Posterior vena cava (tissue), 2 donors: ENCODE measurements at regions of chr1 and their contacts with region 1.

Region 1: GRCh38 chr1:235075188-235075926 is 53.3 kb downstream of the TOMM20 start:
- DNase-seq: peak; percentile 84

Region 2: GRCh38 chr1:234486498-234487448 is 588.6 kb before region 1 on chr1:
- intact Hi-C with region 1: loop called in 1 of 2 experiments (anchors 5 kb)
- DNase-seq: no peak

Region 3: DNA sequence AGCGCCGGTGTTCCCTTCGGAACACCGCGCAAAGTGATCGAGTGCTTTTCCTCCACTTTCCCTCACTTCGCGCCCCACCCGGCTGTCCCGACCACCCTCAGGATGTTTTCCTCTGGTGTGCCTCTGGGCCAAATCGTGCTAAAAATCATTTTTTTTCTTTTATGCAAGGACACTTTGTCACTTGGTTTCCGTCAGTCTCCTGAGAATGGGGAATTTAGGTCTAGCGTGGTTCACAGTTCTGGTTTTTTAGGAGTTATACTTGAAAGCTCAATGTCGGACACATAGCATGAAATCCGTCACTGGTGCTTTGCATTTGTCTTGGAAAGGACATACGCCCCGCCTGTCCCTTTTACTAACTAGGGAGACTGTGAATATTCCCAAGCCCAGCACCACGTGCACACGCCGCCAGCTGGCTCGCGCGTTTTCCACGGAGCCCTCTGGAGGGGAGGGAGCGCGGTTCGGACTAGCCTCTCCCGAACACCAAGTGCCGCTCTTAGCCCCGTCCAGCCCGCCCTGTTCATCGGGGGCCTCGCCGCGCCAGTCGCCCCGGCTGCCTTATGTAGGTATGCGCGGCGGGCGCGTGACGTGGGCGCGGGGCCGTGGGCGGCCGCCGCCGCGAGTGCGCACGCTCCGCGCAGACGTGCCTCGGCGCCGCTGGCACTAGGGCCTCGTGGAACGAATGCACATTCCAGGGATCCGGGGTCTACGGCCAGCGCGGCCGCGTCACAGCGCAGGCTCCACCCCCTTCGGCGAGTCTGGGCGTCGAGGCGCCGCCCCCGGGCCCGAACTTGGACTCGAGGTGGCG is 464.8 kb before region 1 on chr1:
- intact Hi-C with region 1: loop called (anchors 5 kb)
- DNase-seq: peak; percentile 99

Region 4: DNA sequence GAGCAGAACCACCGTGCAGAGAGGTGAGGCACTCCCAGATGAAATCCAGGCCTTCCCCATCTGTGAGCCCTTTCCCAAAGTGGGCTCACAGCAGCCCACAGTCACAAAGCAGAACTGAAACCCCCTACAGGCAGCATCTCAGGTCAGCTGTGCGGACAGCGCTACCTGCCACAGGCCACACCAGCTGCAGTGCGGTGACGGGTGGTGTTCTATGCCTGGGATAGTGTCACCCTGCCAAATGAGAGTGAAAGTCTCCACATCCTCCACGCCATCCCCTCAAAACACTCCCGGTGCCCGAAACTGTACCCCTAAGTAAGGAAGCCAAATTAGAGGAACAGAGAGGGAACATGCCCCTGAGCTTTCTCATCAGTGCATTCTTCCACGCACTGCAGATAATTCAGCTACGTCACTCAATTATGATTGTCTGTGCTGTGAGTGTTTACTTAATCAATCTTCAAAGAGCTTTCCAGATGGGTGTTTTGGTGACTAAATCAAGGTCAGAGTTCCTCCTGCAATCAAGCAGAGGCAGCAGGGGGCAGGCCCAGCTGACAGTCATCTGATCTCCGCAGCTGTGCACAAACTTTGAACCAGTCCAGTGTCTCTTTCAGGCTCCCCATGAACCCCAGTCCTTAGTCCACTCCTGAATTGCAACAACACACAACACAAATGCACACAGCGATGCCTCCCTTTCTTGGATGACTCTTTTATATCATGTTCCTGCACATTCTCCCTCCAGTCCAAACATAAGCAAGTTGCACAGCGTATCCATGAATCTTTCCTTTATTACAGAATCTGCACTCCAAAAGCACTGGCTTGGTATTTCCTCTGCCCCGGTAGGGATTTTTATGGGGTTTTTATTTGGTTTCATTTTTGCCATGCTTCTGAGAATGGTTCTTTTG is 96.7 kb before region 1 on chr1:
- intact Hi-C with region 1: loop called (anchors 5 kb)
- DNase-seq: peak; percentile 86

Region 5: DNA sequence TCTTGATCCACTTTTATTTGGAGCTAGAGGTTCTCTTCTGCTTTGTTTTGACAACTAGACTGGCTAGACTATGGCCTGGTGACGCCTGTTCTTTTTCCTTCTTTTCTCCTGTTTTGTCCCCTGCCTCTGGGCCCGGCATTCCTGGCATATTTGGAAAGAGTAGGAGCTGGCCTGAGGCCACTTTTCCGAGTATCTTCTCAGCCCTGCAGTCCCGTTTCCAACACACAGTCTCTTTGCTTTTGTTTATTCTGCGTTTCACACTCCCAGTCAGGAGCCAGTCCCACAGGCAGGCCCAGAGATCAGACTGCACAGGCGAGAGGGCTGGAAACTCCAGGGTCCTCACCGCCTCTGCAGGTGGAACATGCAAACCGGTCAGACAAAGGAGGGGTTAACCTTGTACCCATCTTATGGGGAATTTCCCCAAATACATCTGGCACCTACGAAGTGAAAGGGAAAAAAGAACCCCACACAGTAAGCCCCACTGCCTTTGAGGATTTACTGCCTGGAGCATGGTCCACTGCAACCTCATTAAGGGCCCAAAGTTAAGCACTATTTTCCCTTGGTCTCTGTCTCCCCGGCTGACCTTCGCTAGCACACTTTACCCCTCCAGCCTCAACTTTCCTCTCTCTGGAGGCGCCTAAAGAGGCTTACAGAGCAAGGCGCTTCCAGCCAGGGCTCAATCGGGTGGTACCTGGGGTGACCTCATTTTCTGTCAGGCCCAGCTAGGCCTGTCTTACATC is 87.8 kb before region 1 on chr1:
- intact Hi-C with region 1: loop called in 1 of 2 experiments (anchors 5 kb)
- DNase-seq: peak; percentile 92